ENCODE measurements at regions of chr12 and their contacts with region 1.

Region 1: DNA sequence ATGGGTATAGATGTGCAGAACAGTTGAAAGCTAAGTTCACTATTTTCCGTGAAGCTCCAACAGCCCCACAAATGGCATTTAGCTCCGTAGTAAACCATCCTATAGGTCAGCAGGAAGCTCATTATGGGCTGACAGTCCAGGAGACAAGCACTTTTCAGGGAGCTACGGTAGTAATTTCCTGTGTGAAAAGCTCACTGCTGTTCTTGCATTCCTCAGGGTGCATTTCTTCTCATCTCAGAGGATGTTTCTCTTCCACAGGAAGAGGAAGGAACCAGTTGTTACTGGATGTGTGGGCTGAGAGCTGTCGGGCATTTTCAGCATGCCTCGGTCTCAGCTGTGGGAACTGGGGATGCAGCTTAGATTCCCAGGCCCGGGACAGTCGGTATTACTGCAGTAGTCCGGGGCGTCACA is 72.8 kb downstream of the GALNT4 start:
- DNase-seq: peak in 4 of 5 donors; percentile 24 to 52 (median 33)
- H3K4me3 ChIP-seq: no peak overlapping the region
- H3K27ac ChIP-seq: no peak overlapping the region
- H3K4me1 ChIP-seq: peaks cover 7% of the 10 kb centered on the region
- H3K27me3 ChIP-seq: no peaks in the 10 kb centered on the region
- CTCF ChIP-seq: no peak
- EP300 ChIP-seq: no peak
- POLR2A ChIP-seq: no peak

Region 2: DNA sequence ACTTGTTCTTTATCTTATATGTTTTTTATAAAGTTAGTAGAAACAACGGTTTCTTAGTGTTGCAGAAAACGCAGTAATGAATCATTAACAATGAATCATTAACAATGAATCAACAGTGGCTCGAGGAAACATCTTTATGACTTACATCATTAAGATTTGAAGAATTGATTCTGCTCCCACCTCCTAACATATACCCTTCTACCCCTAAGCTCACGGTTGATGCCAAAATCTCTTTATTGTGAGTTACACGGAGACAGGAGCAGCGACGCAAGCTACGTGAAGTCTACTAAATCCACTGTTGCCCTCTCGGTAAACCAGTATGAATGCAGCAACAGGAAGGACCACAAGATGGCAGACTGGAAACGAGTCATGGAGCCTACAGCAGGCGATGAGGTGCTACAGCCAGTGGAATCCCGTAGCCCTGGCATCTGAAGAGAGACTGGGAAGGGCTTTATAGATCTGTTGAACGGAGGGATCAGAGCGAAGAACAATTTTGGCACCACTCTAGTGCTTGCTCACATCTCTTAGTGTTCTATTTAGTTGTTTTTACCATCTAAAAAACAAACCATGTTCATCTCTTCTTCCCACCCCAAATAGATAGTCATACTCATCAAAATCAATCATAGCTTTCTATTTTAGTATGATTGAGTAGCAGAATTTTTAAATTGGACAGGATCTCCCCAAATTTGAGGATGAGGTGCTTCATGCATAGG is 432.3 kb before region 1 on chr12:
- intact Hi-C with region 1: loop called in 2 of 4 experiments (anchors 10 kb)
- DNase-seq: peak; percentile 52 to 82 (median 62)
- H3K4me3 ChIP-seq: peak overlapping the region; percentile 8
- H3K27ac ChIP-seq: no peak overlapping the region
- H3K4me1 ChIP-seq: peaks cover 3% of the 10 kb centered on the region
- H3K27me3 ChIP-seq: no peaks in the 10 kb centered on the region
- CTCF ChIP-seq: peak; percentile 39 to 63 (median 56)
- EP300 ChIP-seq: no peak
- POLR2A ChIP-seq: no peak

Region 3: GRCh38 chr12:89494411-89495231 is 42.8 kb after region 1 on chr12:
- intact Hi-C with region 1: no loop called
- DNase-seq: no peak
- H3K4me3 ChIP-seq: no peak overlapping the region
- H3K27ac ChIP-seq: no peak overlapping the region
- H3K4me1 ChIP-seq: no peaks in the 10 kb centered on the region
- H3K27me3 ChIP-seq: no peaks in the 10 kb centered on the region
- CTCF ChIP-seq: no peak
- EP300 ChIP-seq: no peak
- POLR2A ChIP-seq: no peak

Region 4: GRCh38 chr12:89542912-89543592 is 91.2 kb after region 1 on chr12:
- intact Hi-C with region 1: no loop called
- DNase-seq: peak; percentile 33 to 66 (median 59)
- H3K4me3 ChIP-seq: no peak overlapping the region
- H3K27ac ChIP-seq: no peak overlapping the region
- H3K4me1 ChIP-seq: peaks cover 3% of the 10 kb centered on the region
- H3K27me3 ChIP-seq: no peaks in the 10 kb centered on the region
- CTCF ChIP-seq: peak; percentile 45 to 72 (median 67)
- EP300 ChIP-seq: no peak
- POLR2A ChIP-seq: no peak

Region 5: DNA sequence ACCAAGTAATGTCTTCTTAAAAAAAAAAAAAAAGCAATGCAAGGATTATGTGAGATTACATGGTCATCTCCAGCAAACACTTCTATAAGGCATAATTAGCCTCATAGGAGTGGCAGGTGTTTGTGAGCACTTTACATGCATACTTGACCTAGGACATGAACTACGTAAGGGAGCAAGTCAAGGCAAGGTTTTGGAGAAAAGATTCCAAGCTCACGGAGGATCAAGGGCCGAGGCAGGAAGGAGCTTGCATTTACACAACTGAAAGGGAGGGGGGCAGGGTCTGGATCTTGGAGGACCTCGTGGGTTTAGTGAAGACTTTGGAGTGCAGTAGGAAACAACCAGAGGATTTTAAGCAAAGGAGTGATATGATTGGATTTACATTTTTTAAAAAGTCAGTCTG is 1390.6 kb after region 1 on chr12:
- intact Hi-C with region 1: loop called in 1 of 4 experiments (anchors 10 kb)
- DNase-seq: no peak
- H3K4me3 ChIP-seq: no peak overlapping the region
- H3K27ac ChIP-seq: no peak overlapping the region
- H3K4me1 ChIP-seq: no peaks in the 10 kb centered on the region
- H3K27me3 ChIP-seq: no peaks in the 10 kb centered on the region
- CTCF ChIP-seq: no peak
- EP300 ChIP-seq: no peak
- POLR2A ChIP-seq: no peak

Measured in ovary (tissue), 10 donors.